Dorsolateral prefrontal cortex (tissue), 120 donors: ENCODE measurements at regions of chr11 and their contacts with region 1.

Region 1: DNA sequence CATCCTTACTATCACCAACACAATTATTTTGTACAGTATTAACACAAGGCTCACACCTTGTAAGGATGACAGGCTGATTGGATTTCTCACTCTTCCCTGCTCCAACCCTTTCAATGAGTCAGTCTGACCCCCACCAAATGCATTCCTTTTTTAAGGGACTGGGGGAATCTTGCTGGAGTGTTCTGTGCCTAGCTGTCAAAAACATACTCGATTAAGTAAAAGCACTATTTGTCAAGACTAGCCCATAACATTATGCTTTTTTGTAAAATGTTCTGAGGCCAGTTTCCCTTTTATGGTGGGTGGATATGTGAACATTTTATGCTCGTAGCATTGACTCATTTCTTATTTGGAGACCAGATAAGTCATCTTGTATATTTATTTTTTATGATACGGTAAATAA is 87.2 kb downstream of the PDHX start:
- DNase-seq: no peak
- H3K4me3 ChIP-seq: no peak overlapping the region
- H3K27ac ChIP-seq: no peak overlapping the region
- H3K27me3 ChIP-seq: no peaks in the 10 kb centered on the region
- CTCF ChIP-seq: no peak

Region 2: GRCh38 chr11:34836958-34837856 is 166.5 kb before region 1 on chr11:
- intact Hi-C with region 1: no loop called
- DNase-seq: no peak
- H3K4me3 ChIP-seq: no peak overlapping the region
- H3K27ac ChIP-seq: no peak overlapping the region
- H3K27me3 ChIP-seq: no peaks in the 10 kb centered on the region
- CTCF ChIP-seq: peak in 1 of 56 donors; percentile 11

Region 3: DNA sequence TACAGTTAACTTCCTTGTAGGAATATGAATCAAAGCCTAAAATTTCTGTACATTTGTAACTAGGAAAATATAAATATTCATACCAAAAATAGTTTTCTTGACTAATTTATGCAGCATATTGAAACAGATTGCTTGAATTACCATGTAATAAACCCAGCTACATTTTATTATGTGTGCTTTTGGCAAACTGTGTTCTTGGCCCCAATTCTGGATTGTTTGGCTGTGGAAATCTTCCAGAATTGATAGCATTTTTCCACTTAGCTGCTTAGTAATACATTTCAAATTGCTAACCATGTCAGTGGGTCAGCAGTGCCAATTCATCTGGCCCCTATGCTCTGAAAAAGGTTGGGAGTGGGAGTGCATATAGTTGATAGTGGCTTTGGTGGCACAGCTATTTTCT is 55.0 kb before region 1 on chr11:
- intact Hi-C with region 1: no loop called
- DNase-seq: no peak
- H3K4me3 ChIP-seq: no peak overlapping the region
- H3K27ac ChIP-seq: no peak overlapping the region
- H3K27me3 ChIP-seq: no peaks in the 10 kb centered on the region
- CTCF ChIP-seq: no peak

Region 4: DNA sequence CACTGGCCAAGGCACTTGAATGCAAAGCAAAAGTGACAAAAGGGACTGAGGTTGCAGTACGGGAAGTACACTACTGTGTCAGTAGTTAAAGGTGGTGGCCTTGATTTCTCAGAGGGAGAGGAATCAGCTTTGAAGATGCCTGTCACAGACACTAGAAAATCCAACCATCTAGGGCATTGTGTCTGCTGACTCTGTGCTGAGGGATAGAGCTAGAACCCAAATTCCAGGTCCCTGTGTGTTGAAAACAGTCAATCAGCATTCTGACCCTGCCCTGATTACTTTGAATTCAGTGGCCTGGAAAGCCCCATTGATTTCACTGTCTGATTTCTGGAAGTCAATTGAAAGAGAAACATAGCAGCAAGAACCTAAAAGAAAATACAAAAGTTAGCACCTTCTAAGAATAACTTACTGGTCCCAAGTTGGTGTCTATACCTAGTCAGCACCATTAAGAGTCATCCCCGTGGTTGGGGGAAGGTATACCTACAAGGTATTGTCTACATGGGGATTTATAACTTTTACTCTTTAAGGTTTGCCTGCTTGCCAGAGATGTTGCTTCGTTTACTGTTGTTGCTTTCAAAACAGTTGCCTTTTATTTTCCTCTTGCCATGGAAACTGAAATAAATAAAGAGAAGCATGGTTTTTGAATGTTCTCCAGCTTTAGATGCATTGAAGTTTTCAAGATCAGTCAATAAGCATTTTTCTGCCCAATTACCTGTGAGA is 10.0 kb after region 1 on chr11:
- intact Hi-C with region 1: no loop called
- DNase-seq: no peak
- H3K4me3 ChIP-seq: no peak overlapping the region
- H3K27ac ChIP-seq: no peak overlapping the region
- H3K27me3 ChIP-seq: peaks cover 0 to 4% (median 0%) of the 10 kb centered on the region in 45 donors
- CTCF ChIP-seq: no peak

Region 5: GRCh38 chr11:35237860-35238715 is 234.4 kb after region 1 on chr11:
- intact Hi-C with region 1: loop called in 1 of 2 experiments (anchors 5 kb)
- DNase-seq: peak in 3 of 10 donors; percentile 14 to 31 (median 27)
- H3K4me3 ChIP-seq: peak overlapping the region in 1 of 59 donors; percentile 9
- H3K27ac ChIP-seq: no peak overlapping the region
- H3K27me3 ChIP-seq: no peaks in the 10 kb centered on the region
- CTCF ChIP-seq: peak; percentile 42 to 88 (median 76)

Region 6: GRCh38 chr11:35288817-35289541 is 285.3 kb after region 1 on chr11:
- intact Hi-C with region 1: no loop called
- DNase-seq: no peak
- H3K4me3 ChIP-seq: no peak overlapping the region
- H3K27ac ChIP-seq: peak overlapping the region in 2 of 59 donors; percentile 17 to 52
- H3K27me3 ChIP-seq: no peaks in the 10 kb centered on the region
- CTCF ChIP-seq: no peak